ENCODE measurements at regions of chr9 and their contacts with region 1.

Region 1: GRCh38 chr9:6739218-6739617 is 18.6 kb upstream of the KDM4C start:
- DNase-seq: peak in 1 of 2 experiments; percentile 43
- H3K4me3 ChIP-seq: no peak overlapping the region
- H3K27ac ChIP-seq: no peak overlapping the region
- H3K4me1 ChIP-seq: no peaks in the 10 kb centered on the region
- H3K27me3 ChIP-seq: no peaks in the 10 kb centered on the region
- CTCF ChIP-seq: peak; percentile 60

Region 2: GRCh38 chr9:6584881-6585597 is 154.2 kb before region 1 on chr9:
- CTCF ChIA-PET with region 1: no interaction called
- POLR2A ChIA-PET with region 1: no interaction called
- intact Hi-C with region 1: loop called (anchors 5 kb)
- DNase-seq: no peak
- H3K4me3 ChIP-seq: no peak overlapping the region
- H3K27ac ChIP-seq: no peak overlapping the region
- H3K4me1 ChIP-seq: 0 out of 2 replicates have a peak, but pooled peaks cover under 1% of the 10 kb centered on the region
- H3K27me3 ChIP-seq: no peaks in the 10 kb centered on the region
- CTCF ChIP-seq: peak; percentile 67

Region 3: GRCh38 chr9:6592231-6592630 is 147.0 kb before region 1 on chr9:
- CTCF ChIA-PET with region 1: interaction called, 10 read pairs
- POLR2A ChIA-PET with region 1: no interaction called
- intact Hi-C with region 1: loop called (anchors 5 kb)
- DNase-seq: peak in 1 of 2 experiments; percentile 73
- H3K4me3 ChIP-seq: no peak overlapping the region
- H3K27ac ChIP-seq: peak overlapping the region; percentile 49
- H3K4me1 ChIP-seq: peaks cover 30% of the 10 kb centered on the region
- H3K27me3 ChIP-seq: no peaks in the 10 kb centered on the region
- CTCF ChIP-seq: no peak

Region 4: DNA sequence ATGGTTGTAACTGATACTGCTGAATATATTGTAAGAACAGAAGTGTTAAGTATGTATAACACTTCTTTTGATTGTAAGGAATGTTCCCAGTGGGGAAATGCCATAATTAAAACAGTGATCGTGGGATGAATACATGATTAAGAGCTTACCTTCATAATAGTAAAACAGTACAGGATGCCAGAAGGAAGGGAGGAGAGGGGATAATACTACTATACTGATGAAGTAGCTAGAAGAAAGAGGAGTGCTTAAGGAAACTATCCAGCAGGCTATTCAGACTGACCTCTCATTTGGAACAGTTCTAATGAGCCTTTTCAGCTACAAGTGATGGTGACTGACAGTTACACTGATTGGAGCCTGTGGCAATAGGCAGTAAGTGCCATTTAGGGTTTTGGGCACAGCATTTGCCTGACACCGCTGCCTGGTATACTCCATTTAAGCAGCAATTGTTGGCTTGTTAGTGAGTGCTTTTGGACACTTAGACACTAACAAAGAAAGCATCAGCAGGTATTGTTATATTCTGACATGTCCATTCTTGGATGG is 15.3 kb before region 1 on chr9:
- CTCF ChIA-PET with region 1: interaction called, 10 read pairs
- POLR2A ChIA-PET with region 1: no interaction called
- intact Hi-C with region 1: no loop called
- DNase-seq: no peak
- H3K4me3 ChIP-seq: no peak overlapping the region
- H3K27ac ChIP-seq: no peak overlapping the region
- H3K4me1 ChIP-seq: no peaks in the 10 kb centered on the region
- H3K27me3 ChIP-seq: no peaks in the 10 kb centered on the region
- CTCF ChIP-seq: no peak

Region 5: DNA sequence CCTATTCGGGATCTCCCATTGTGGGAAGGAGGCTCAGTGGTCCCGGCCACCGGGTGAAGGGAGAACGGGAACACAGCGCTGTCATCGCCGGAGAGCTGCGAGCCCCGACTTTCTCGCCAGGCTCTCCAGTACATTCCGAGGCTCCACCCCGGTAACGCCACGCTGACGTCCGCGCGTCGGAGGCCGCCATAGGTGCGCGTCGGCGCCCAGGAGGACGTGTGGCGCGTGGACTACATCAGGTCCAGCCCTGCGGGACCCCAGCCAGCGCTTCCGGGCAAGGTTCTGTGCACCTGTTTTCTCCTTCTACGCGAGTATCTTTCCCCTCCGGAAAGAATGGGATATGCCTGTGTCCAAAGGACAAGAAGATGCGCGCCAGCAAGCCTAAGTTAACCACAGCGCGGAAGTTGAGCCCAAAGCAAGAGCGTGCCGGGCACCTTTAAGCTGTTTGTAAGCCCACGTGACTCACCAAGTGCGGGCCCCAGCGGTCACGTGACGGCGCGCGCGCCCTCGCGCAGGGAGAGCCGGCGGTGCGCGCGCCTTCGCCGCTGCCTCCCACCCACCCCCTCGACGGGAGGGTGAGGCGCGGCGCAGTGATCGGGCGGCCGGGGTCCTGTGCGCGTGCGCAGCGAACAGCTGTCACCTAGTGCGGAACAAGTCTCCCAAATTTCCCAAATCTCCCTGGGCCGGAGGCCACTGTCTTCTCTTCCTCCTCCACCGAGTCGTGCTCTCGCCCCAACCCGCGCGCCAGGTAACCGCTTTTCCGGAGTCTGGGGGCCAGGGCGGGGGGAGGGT is 18.4 kb after region 1 on chr9 and contains the start of gene KDM4C:
- CTCF ChIA-PET with region 1: no interaction called
- POLR2A ChIA-PET with region 1: no interaction called
- intact Hi-C with region 1: no loop called
- DNase-seq: peak; percentile 72 to 86
- H3K4me3 ChIP-seq: peak within 1 kb of the TSS; percentile 86
- H3K27ac ChIP-seq: peak within 1 kb of the TSS; percentile 92
- H3K4me1 ChIP-seq: peaks cover 12% of the 10 kb centered on the region
- H3K27me3 ChIP-seq: no peaks in the 10 kb centered on the region
- CTCF ChIP-seq: no peak
- total RNA-seq, gene KDM4C: 11.6 and 12.9 TPM in 2 replicates